ENCODE measurements at regions of chr14 and their contacts with region 1.

Region 1: GRCh38 chr14:70714055-70714621 is 72.4 kb downstream of the TTC9 start:
- DNase-seq: peak; percentile 38
- CTCF ChIP-seq: peak; percentile 54

Region 2: DNA sequence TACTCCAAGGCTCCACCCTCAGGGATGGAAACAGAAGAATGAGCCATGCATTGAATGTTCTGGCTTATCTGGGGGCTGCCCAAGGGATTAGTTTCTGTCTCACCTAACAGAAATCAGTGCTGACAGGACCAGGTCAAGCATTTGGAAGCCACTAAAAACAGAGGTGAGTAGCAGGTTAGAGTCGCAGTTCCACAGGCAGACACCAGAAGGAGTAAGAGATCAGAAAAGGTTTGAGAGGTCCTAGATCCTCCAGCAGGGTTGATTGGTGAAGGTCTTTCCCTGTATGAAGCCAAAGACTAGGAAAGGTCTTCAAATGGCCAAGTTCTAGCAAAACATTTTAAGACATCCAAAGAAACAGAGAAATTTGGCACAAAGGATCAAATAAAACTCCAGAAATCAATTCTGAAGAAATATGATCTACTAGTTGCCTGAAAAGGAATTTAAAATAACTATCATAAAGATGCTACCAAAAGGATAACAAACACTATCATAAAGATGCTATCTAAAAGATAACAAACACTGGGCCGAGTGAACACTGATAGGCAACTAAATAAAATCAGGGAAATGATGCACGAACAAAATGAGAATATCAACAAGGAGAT is 91.9 kb before region 1 on chr14:
- CTCF ChIA-PET with region 1: interaction called, 43 read pairs
- POLR2A ChIA-PET with region 1: no interaction called
- DNase-seq: peak; percentile 66
- CTCF ChIP-seq: peak; percentile 70

Region 3: DNA sequence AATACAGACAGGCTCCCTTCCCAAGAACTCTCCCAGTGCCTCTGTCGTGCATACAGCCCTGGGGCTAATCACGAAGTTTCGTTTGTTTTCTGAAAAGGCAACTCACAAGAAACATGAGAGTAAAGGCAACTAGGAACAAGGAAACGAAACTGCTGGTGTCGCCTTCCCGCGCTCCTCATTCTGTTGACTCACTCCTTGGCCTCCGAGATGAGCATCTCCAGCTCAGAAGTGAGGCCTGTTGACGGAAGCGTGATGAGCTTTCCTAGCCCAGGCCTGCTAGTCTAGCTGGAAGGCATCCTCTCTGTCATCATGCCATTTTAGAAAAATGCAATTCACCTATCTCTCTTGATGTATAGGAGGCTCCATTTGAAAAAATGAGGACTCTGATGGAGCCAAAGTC is 21.9 kb before region 1 on chr14:
- CTCF ChIA-PET with region 1: interaction called, 11 read pairs
- POLR2A ChIA-PET with region 1: no interaction called
- DNase-seq: no peak
- CTCF ChIP-seq: no peak

Region 4: DNA sequence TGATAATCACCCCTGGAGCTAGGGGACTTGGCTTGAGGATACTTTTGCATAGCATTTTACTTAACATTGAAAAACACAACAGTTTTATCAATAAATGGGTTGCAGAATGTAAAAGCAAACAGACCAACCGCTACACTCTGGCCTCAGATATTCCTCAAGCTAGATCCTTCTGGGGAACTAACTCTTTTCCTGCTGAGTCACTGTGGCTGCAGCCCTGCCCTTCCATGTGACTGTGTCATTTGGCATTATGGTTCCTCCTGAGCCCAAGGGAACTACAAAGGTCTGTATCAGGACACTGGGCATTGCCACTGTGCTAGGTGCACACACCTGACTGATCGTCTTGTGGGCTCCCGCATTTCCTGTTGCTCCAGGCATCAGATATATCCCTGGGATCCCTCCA is 15.8 kb before region 1 on chr14:
- CTCF ChIA-PET with region 1: interaction called, 26 read pairs
- POLR2A ChIA-PET with region 1: no interaction called
- DNase-seq: no peak
- CTCF ChIP-seq: no peak

Measured in GM10248 (cell line).